WTC11 (cell line): ENCODE measurements at regions of chr16 and their contacts with region 1.

Region 1: DNA sequence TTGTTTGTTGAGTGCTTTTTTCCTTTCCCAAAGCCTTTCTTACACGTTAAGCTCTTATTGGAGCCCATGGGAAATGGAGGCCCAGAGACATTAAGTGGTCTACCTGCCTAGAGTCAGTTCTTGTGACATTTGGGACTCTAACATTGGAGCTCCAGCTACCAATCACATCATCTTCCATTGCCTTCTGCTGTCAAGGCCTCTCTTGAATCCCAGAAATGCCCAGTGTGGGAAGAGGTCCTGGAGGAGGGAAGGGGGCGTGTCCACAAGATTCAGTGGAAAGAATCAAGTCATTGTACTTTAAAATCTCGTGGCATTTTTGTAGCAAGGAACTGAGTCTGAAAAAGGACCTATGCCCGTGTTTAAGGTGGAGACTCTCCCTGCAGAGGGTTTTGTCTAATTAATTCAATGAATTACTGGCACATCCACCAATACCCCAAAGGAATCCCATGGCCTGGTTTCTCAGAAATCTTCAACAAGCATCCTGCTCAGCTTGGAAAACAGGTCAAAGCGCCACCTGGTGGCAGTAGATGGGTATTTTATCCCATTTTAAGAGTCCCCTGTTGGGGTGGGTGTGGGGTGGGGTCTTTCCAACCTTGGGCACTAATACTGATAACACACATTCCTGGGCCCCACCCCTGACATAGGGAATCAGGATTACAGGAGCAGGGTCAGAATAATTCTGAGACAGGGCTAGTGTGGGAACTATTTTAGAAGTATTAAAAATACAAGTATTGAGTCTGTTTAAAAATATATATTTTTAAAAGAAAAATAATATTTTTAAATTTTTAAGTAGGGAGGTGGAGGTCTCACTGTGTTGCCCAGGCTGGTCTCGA is 24.6 kb downstream of the GPT2 start:
- DNase-seq: peak; percentile 81
- ATAC-seq: peak; percentile 82
- H3K4me3 Mint-ChIP-seq: no peak overlapping the region
- H3K27ac Mint-ChIP-seq: peak overlapping the region; percentile 59
- H3K4me1 Mint-ChIP-seq: peaks cover 6% of the 10 kb centered on the region; the same call in 1 of the 2 replicates
- H3K27me3 Mint-ChIP-seq: no peaks in the 10 kb centered on the region
- CTCF ChIP-seq: peak; percentile 89

Region 2: GRCh38 chr16:46807336-46807735 is 101.4 kb before region 1 on chr16:
- CTCF ChIA-PET with region 1: no interaction called
- POLR2A ChIA-PET with region 1: no interaction called
- DNase-seq: no peak
- ATAC-seq: no peak
- H3K4me3 Mint-ChIP-seq: no peak overlapping the region
- H3K27ac Mint-ChIP-seq: no peak overlapping the region
- H3K4me1 Mint-ChIP-seq: peaks cover 7% of the 10 kb centered on the region; the same call in 1 of the 2 replicates
- H3K27me3 Mint-ChIP-seq: no peaks in the 10 kb centered on the region
- CTCF ChIP-seq: no peak

Region 3: DNA sequence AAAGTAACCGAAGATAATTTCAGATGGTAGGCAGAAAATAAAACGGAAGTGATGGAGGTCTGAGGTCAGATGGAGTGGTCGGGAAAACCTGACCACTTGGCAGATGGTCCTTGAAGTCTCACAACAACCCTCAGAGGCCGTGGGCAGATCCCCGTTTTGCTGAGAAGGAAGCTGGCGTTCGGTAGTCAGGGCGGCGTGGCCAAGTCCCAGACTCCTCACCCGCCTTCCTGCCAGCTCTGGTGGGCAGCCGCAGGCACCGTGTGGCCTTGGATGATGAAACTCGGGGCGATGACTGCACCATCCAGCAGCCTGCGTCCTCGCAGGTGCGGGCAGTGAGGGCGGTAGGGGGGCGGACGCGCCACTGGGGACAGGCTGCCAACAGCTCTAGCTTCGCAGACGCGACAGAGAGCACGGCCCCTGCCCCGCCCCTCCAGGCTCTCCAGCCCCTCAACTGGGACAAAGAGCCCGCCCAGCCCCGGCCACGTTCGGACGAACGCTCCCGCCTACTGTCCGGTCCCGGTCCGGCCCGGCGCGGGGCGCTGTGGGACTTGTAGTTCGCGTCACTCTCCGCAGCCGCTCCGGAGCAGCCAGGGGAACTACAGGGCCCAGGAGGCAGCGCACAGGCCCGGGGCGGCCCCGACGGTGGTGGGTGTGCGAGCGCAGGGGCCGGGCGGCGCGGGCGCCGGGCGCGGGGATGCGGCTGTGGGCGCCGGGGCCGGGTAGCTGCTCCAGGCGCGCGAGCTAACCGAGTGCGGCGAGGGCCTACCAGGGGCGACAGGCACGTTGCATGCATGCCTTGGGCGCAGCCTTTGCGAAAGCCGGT is 24.9 kb before region 1 on chr16 and contains the start of gene GPT2:
- CTCF ChIA-PET with region 1: interaction called, 30 read pairs
- POLR2A ChIA-PET with region 1: interaction called, 3 read pairs
- DNase-seq: peak; percentile 100
- ATAC-seq: peak; percentile 97
- H3K4me3 Mint-ChIP-seq: peak within 1 kb of the TSS; percentile 92
- H3K27ac Mint-ChIP-seq: peak within 1 kb of the TSS; percentile 95
- H3K4me1 Mint-ChIP-seq: peaks cover 52% of the 10 kb centered on the region
- H3K27me3 Mint-ChIP-seq: no peaks in the 10 kb centered on the region
- CTCF ChIP-seq: no peak
- total RNA-seq, gene GPT2: 61.0 to 81.8 TPM (median 63.1 TPM) in 3 replicates

Region 4: GRCh38 chr16:48212033-48212432 is 1303.3 kb after region 1 on chr16:
- CTCF ChIA-PET with region 1: interaction called, 10 read pairs
- POLR2A ChIA-PET with region 1: no interaction called
- DNase-seq: no peak
- ATAC-seq: no peak
- H3K4me3 Mint-ChIP-seq: no peak overlapping the region
- H3K27ac Mint-ChIP-seq: no peak overlapping the region
- H3K4me1 Mint-ChIP-seq: no peaks in the 10 kb centered on the region
- H3K27me3 Mint-ChIP-seq: no peaks in the 10 kb centered on the region
- CTCF ChIP-seq: no peak